Heart right ventricle (tissue), 16 donors: ENCODE measurements at regions of chr5 and their contacts with region 1.

Region 1: GRCh38 chr5:168706655-168707069 is 127.5 kb upstream of the PANK3 start:
- DNase-seq: peak in 1 of 2 donors; percentile 53
- ATAC-seq: peak; percentile 49 to 86 (median 68)
- H3K4me3 ChIP-seq: no peak overlapping the region
- H3K27ac ChIP-seq: no peak overlapping the region
- H3K4me1 ChIP-seq: no peaks in the 10 kb centered on the region
- H3K27me3 ChIP-seq: no peaks in the 10 kb centered on the region
- CTCF ChIP-seq: peak; percentile 27 to 76 (median 59)

Region 2: GRCh38 chr5:168879929-168880328 is 173.3 kb after region 1 on chr5:
- intact Hi-C with region 1: loop called in 2 of 10 experiments (anchors 10 kb)
- DNase-seq: peak in 1 of 2 donors; percentile 44
- ATAC-seq: peak in 7 of 8 donors; percentile 53 to 90 (median 68)
- H3K4me3 ChIP-seq: no peak overlapping the region
- H3K27ac ChIP-seq: peak overlapping the region in 4 of 10 donors; percentile 14 to 68 (median 43)
- H3K4me1 ChIP-seq: peaks cover 0 to 26% (median 7%) of the 10 kb centered on the region in 9 donors
- H3K27me3 ChIP-seq: no peaks in the 10 kb centered on the region
- CTCF ChIP-seq: no peak

Region 3: GRCh38 chr5:168947212-168947868 is 240.7 kb after region 1 on chr5:
- intact Hi-C with region 1: loop called (anchors 5 to 10 kb)
- DNase-seq: peak; percentile 28 to 29
- ATAC-seq: peak in 7 of 8 donors; percentile 33 to 68 (median 58)
- H3K4me3 ChIP-seq: no peak overlapping the region
- H3K27ac ChIP-seq: no peak overlapping the region
- H3K4me1 ChIP-seq: peaks cover 0 to 10% (median 0%) of the 10 kb centered on the region in 9 donors
- H3K27me3 ChIP-seq: no peaks in the 10 kb centered on the region
- CTCF ChIP-seq: peak; percentile 37 to 70 (median 67)

Region 4: DNA sequence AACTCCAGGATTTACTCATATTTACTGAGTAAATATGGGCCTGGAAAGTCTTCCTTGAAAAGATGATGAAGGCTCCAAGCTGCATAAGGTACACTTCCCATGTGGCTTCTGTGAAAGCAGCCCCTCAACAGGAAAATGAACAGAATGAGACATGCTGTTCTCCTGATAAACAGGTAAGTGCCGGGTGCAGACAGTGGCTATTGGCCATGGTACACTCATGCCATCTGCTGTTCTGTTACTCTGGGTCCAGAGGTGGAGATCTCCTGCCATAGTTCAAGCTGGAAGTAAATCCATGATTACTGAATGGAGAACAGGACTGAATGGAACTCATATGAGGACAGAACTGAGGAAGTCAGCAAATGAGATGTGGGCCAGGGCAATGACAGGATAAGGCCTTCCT is 490.7 kb after region 1 on chr5:
- intact Hi-C with region 1: loop called in 1 of 10 experiments (anchors 10 kb)
- DNase-seq: peak in 1 of 2 donors; percentile 20
- ATAC-seq: peak; percentile 49 to 85 (median 67)
- H3K4me3 ChIP-seq: no peak overlapping the region
- H3K27ac ChIP-seq: no peak overlapping the region
- H3K4me1 ChIP-seq: peaks cover 0 to 10% (median 0%) of the 10 kb centered on the region in 9 donors
- H3K27me3 ChIP-seq: peaks cover 0 to 5% (median 0%) of the 10 kb centered on the region in 7 donors
- CTCF ChIP-seq: peak; percentile 12 to 61 (median 49)